Heart left ventricle (tissue), 16 donors: ENCODE measurements at regions of chr18 and their contacts with region 1.

Region 1: GRCh38 chr18:6069103-6069502 is 173.8 kb upstream of the TMEM200C start:
- DNase-seq: no peak
- ATAC-seq: no peak
- H3K4me3 ChIP-seq: no peak overlapping the region
- H3K27ac ChIP-seq: no peak overlapping the region
- H3K4me1 ChIP-seq: no peaks in the 10 kb centered on the region
- H3K27me3 ChIP-seq: no peaks in the 10 kb centered on the region
- CTCF ChIP-seq: no peak
- POLR2A ChIP-seq: no peak

Region 2: GRCh38 chr18:6109743-6110142 is 40.6 kb after region 1 on chr18:
- intact Hi-C with region 1: loop called in 1 of 10 experiments (anchors 10 kb)
- DNase-seq: no peak
- ATAC-seq: peak in 3 of 4 donors; percentile 66 to 80 (median 79)
- H3K4me3 ChIP-seq: no peak overlapping the region
- H3K27ac ChIP-seq: no peak overlapping the region
- H3K4me1 ChIP-seq: peaks cover 0 to 4% (median 0%) of the 10 kb centered on the region in 12 donors
- H3K27me3 ChIP-seq: no peaks in the 10 kb centered on the region
- CTCF ChIP-seq: no peak
- POLR2A ChIP-seq: no peak

Region 3: DNA sequence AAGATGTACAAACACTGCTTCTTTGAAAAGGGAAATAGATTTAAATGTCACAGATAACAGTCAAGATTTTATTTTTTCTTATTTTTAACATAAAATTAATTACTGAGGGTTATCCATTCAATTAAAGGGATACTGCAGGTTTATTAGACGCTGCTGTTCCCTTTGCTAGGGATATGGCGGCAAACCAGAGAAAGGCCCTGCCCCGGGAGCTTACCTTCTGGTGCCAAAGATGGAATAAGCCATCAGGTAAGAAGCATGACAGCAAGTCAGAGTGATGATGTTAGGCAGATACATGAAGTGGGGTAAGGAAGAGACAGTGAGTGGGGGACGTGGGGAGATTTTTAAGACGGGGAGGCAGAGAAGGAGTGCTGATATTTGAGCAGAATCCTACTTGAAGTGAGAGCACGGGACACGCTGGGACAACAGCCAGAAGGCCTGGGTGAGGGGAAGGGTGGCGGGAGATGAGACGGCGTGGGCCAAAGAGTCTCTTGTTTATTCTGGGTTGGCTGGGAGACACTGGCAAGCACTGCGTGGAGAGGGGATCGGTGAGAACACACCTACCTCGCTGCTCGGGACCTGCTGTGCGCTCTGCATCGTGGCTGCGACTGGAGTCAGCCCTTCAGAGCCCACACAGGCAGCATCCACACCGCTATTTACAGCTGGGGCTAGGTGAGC is 76.7 kb after region 1 on chr18:
- intact Hi-C with region 1: loop called in 1 of 10 experiments (anchors 10 kb)
- DNase-seq: peak in 4 of 5 donors; percentile 30 to 79 (median 69)
- ATAC-seq: peak; percentile 90 to 99 (median 94)
- H3K4me3 ChIP-seq: peak overlapping the region in 2 of 12 donors; percentile 0 to 16
- H3K27ac ChIP-seq: peak overlapping the region in 1 of 12 donors; percentile 5
- H3K4me1 ChIP-seq: peaks cover 0 to 6% (median 0%) of the 10 kb centered on the region in 12 donors
- H3K27me3 ChIP-seq: no peaks in the 10 kb centered on the region
- CTCF ChIP-seq: no peak
- POLR2A ChIP-seq: no peak

Region 4: DNA sequence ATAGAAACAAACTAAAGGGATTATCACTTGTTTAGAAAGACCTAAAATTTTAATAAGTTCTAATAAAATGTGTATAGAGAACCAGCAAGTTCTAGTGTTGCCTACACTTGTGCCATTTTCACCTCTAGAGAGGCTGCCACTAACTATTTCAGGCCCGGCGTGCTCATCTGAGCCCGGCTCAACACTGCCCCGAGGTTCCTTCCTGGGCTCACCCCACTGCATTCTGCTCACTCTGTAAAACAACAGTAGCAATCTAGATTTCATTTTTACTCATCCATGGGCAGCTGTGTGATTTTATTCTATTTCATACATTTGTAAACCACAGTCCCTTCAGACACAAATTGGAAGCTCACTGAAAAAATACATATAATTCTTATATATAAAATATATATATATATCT is 92.4 kb after region 1 on chr18:
- intact Hi-C with region 1: no loop called
- DNase-seq: no peak
- ATAC-seq: no peak
- H3K4me3 ChIP-seq: no peak overlapping the region
- H3K27ac ChIP-seq: no peak overlapping the region
- H3K4me1 ChIP-seq: peaks cover 0 to 5% (median 0%) of the 10 kb centered on the region in 12 donors
- H3K27me3 ChIP-seq: no peaks in the 10 kb centered on the region
- CTCF ChIP-seq: no peak
- POLR2A ChIP-seq: no peak

Region 5: GRCh38 chr18:6281874-6282273 is 212.8 kb after region 1 on chr18:
- intact Hi-C with region 1: no loop called
- DNase-seq: no peak
- ATAC-seq: peak in 1 of 4 donors; percentile 20
- H3K4me3 ChIP-seq: no peak overlapping the region
- H3K27ac ChIP-seq: no peak overlapping the region
- H3K4me1 ChIP-seq: no peaks in the 10 kb centered on the region
- H3K27me3 ChIP-seq: no peaks in the 10 kb centered on the region
- CTCF ChIP-seq: no peak
- POLR2A ChIP-seq: no peak